Dendritic cell treated with granulocyte-macrophage colony-stimulating factor and Interleukin-4, amounts not matched to agents 40 ng/mL and 50 ng/mL, for 4 days (primary cell): ENCODE measurements at regions of chr5 and their contacts with region 1.

Region 1: DNA sequence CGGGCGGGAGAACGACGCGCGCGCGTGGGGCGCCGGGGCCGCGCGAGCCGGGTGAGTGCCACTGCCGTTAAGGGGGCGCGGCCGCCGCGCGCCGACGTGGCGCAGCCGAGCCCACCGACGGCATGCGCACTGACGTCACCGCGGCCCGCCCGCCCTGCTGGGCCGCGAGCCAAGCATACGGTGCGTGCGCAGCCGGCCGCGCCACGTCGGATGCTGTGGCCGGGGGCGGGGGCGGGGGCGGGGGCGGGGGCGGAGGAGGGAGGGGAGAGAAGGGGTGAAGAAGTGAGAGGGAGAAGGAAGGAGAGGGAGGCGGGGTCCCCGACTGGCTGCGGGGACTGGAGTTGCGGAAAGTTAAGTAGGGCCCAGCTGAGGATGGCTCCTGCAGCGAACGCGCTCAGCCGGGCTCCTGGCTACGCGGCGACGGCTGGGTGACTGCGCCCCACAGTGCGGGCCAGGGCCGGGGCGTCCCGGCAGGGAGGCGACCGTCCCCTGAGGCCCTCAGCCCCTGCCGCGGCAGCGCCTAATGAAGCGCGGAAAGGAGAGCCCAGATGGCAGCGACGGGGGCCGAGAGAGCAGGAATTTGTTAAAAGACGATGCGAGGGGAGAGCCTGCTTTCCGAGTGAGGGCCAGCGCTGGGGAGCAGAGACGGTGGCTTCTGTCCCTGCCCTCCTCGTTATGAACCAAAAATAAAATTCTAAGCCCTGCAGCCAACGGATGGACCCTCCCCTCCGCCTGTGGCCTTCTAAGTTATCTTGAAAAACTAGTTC is at the start of gene DAP:
- H3K4me3 Mint-ChIP-seq: peak within 1 kb of the TSS; percentile 91
- H3K27ac Mint-ChIP-seq: peak within 1 kb of the TSS; percentile 90
- H3K4me1 Mint-ChIP-seq: peaks cover 75% of the 10 kb centered on the region
- H3K27me3 Mint-ChIP-seq: no peaks in the 10 kb centered on the region

Region 2: GRCh38 chr5:10441083-10441991 is 320.0 kb before region 1 on chr5 and contains the start of gene ROPN1L:
- intact Hi-C with region 1: loop called (anchors 10 kb)
- H3K4me3 Mint-ChIP-seq: peak within 1 kb of the TSS; percentile 85
- H3K27ac Mint-ChIP-seq: peak within 1 kb of the TSS; percentile 77
- H3K4me1 Mint-ChIP-seq: peaks cover 36% of the 10 kb centered on the region
- H3K27me3 Mint-ChIP-seq: peaks cover 15% of the 10 kb centered on the region

Region 3: GRCh38 chr5:10635257-10635866 is 126.0 kb before region 1 on chr5:
- intact Hi-C with region 1: loop called (anchors 10 kb)
- H3K4me3 Mint-ChIP-seq: no peak overlapping the region
- H3K27ac Mint-ChIP-seq: peak overlapping the region; percentile 40
- H3K4me1 Mint-ChIP-seq: peaks cover 70% of the 10 kb centered on the region
- H3K27me3 Mint-ChIP-seq: peaks cover 23% of the 10 kb centered on the region

Region 4: DNA sequence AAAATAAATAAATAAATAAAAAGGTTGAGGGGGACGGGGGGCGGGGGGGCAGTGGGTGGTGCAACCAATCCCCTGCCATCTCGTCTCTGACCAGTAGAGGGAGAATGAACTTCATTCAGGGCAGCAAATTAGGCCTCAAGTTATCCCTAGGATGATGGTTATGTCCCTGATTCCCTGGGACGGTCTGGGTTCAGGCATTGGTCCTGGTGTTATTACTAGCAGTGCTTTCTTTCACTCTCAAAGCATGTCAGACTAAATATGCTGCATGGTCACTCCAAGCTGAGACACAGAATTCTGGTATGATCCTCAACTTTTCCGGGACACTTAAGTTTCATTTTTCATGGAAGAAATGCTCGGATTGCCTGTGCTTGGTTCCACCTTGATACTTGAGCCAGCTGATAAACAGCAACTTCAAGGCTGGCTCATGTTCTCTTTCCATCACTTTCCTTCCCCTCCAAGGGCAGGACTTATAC is 59.7 kb before region 1 on chr5:
- intact Hi-C with region 1: loop called (anchors 1 kb)
- H3K4me3 Mint-ChIP-seq: no peak overlapping the region
- H3K27ac Mint-ChIP-seq: no peak overlapping the region
- H3K4me1 Mint-ChIP-seq: peaks cover 54% of the 10 kb centered on the region
- H3K27me3 Mint-ChIP-seq: no peaks in the 10 kb centered on the region

Region 5: DNA sequence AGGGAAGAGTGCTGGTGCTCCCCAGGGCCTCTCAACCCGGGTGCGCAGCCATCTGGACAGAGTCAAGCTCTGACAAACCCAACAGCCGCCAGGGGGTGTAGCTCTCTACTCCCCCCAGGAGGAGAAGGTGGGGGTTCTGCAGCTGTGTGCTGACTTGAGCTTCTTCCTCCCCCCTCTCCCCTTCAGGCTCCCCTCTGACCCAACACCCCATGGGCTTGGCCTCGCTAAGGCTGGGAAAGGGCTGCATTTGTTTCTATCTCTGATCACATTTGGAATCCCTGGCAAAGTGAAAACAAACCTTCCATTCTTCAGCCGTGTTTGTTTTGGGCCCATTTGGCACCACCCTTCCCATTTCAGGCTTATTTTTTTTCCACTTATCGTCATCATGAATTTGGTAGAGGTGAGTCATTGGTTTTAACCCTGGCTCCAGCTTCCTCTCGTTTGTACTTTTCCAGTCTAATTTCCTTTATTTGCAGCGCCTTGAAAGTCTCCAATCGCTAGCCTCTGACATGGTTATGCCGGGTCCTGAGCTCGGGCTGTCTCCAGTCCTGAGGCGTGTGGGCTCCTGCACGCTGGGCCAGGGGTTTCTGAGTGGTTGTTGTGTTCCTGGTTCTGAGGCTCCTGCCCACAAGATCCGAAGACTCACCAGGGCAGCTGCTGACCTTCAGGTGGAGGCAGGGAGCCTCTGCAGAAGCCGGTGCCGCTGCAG is 36.4 kb before region 1 on chr5:
- intact Hi-C with region 1: no loop called
- H3K4me3 Mint-ChIP-seq: no peak overlapping the region
- H3K27ac Mint-ChIP-seq: peak overlapping the region; percentile 59
- H3K4me1 Mint-ChIP-seq: peaks cover 77% of the 10 kb centered on the region
- H3K27me3 Mint-ChIP-seq: no peaks in the 10 kb centered on the region

Region 6: GRCh38 chr5:10844016-10844415 is 82.7 kb after region 1 on chr5:
- intact Hi-C with region 1: no loop called
- H3K4me3 Mint-ChIP-seq: no peak overlapping the region
- H3K27ac Mint-ChIP-seq: no peak overlapping the region
- H3K4me1 Mint-ChIP-seq: no peaks in the 10 kb centered on the region
- H3K27me3 Mint-ChIP-seq: no peaks in the 10 kb centered on the region

Region 7: GRCh38 chr5:10856683-10857337 is 95.5 kb after region 1 on chr5:
- intact Hi-C with region 1: loop called (anchors 5 kb)
- H3K4me3 Mint-ChIP-seq: peak overlapping the region; percentile 50
- H3K27ac Mint-ChIP-seq: peak overlapping the region; percentile 76
- H3K4me1 Mint-ChIP-seq: peaks cover 73% of the 10 kb centered on the region
- H3K27me3 Mint-ChIP-seq: peaks cover 25% of the 10 kb centered on the region